ENCODE measurements at regions of chr1 and their contacts with region 1.

Region 1: DNA sequence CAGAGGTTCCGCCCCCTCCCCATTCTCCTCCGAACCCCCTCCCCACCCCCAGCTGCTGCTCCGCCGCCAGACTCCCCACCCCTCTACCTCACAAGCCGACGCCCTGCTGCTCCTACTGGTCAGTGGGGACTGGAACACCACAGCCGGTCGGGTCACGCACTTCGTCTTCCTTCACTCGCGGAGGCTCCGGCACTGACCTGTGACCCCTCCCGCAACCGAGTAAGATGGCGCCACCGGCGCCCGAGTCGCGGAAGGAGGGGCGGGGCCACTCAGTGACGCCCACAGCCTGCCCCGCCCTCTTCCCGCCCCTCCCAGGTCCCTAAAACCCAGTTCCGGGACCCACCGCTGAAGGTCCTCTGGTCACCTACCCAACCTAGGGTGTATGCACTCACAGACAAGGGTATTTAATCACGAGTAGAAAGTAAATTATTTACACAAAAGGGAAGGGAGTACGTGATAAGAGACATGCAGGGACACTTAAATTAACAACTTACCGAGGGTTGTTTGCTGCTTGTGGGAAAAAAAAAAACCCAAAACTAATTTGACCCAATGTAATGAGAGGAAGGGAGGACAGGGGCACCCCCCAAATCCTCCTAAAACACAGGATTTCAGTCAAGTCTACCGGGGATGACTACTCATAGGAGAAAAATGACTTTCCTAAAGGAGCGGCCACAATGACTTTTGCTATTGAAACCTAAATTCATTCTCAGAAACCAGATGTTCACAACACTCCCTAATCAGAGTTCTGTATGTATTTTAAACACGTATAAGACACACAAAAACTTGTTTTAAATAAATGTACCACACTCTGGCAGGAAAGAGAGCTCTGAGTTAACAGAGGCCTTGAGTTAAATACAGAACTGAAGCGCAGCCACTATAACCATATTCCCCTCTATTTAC is at the start of gene RIT1:
- DNase-seq: peak; percentile 72 to 84
- ATAC-seq: peak; percentile 93 to 95
- H3K4me3 ChIP-seq: peak within 1 kb of the TSS; percentile 73 to 99 (median 83)
- H3K27ac ChIP-seq: peak within 1 kb of the TSS; percentile 89 to 96 (median 93)
- H3K4me1 ChIP-seq: peaks cover 8 to 16% of the 10 kb centered on the region in 2 donors
- H3K27me3 ChIP-seq: no peaks in the 10 kb centered on the region
- CTCF ChIP-seq: peak in 2 of 5 experiments; percentile 20 to 35
- POLR2A ChIP-seq: peak; percentile 59 to 65
- total RNA-seq, gene RIT1: 9.6 to 16.8 (median 15.2) TPM

Region 2: DNA sequence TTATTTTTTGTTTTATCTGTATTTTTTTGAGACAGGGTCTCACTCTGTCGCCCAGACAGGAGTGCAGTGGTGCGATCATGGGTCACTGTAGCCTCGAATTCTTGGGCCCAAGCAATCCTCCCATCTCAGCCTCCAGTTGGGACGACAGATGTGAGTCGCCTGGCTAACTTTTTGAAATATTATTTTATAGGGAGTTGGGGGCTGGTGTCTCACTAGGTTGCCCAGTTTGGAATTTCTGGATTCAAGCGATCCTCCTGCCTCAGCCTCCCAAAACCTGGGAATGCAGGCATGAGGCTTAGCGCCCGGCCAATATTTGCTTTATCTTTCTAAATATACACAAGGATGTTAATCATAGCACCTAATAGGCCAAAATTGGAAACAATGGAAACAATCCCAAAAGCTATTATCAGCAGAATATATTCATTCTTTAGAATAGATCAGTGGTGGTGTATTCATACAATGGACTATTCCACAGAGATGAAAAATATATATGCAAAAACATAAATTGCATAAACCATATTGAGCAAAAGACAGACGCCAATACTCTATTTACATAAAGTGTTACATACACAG is 166.6 kb before region 1 on chr1:
- in situ Hi-C with region 1: no loop called
- intact Hi-C with region 1: loop called (anchors 2 kb)
- DNase-seq: no peak
- ATAC-seq: no peak
- H3K4me3 ChIP-seq: peak overlapping the region; percentile 58 to 78 (median 76)
- H3K27ac ChIP-seq: peak overlapping the region; percentile 69 to 84 (median 75)
- H3K4me1 ChIP-seq: peaks cover 0 to 5% of the 10 kb centered on the region in 2 donors
- H3K27me3 ChIP-seq: no peaks in the 10 kb centered on the region
- CTCF ChIP-seq: no peak
- POLR2A ChIP-seq: no peak